ENCODE measurements at regions of chr3 and their contacts with region 1.

Region 1: GRCh38 chr3:12395349-12396012 is 88.8 kb upstream of the TSEN2 start:
- DNase-seq: peak; percentile 46
- H3K4me3 Mint-ChIP-seq: peak overlapping the region; percentile 20
- H3K27ac Mint-ChIP-seq: peak overlapping the region; percentile 40
- H3K4me1 Mint-ChIP-seq: peaks cover 16% of the 10 kb centered on the region
- H3K27me3 Mint-ChIP-seq: peaks cover 27% of the 10 kb centered on the region

Region 2: DNA sequence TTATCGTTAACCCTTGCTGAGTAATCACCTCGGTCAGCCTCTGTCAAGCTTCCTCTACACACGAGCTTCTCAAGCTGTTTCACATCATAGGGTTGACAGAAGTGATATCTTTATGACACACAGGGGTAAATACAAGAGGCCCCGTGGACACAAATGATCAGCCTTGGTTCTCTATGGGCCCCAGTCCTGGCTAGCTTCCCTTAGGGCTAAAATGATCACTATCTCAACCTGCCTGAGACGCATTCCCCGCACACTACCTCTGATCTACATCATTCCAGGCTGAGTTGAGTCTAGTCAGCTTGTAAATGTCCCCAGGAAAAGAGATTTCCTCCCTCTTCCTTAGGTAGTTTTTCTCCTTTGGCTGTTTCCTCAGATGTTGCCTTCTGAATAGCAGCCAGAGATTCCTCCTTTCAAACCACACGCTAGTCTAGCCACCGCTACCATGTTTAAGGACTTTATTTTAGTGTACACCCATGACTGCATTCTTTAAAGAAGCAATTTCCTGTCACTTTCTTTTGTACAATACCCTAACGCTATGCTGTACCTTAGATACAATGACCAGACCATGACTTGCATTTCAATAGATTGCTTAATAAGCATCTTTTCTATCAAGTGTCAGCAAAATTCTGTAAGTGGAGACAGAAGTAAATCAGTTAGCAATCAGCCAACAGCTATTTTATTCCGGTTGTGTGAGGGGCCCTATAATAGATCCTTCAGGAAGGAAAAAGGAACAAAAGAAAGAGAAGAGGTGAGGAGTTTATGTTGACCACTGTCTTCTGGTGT is 141.7 kb before region 1 on chr3:
- CTCF ChIA-PET with region 1: no interaction called
- POLR2A ChIA-PET with region 1: no interaction called
- intact Hi-C with region 1: no loop called
- DNase-seq: no peak
- H3K4me3 Mint-ChIP-seq: no peak overlapping the region
- H3K27ac Mint-ChIP-seq: no peak overlapping the region
- H3K4me1 Mint-ChIP-seq: no peaks in the 10 kb centered on the region
- H3K27me3 Mint-ChIP-seq: peaks cover 16% of the 10 kb centered on the region

Region 3: DNA sequence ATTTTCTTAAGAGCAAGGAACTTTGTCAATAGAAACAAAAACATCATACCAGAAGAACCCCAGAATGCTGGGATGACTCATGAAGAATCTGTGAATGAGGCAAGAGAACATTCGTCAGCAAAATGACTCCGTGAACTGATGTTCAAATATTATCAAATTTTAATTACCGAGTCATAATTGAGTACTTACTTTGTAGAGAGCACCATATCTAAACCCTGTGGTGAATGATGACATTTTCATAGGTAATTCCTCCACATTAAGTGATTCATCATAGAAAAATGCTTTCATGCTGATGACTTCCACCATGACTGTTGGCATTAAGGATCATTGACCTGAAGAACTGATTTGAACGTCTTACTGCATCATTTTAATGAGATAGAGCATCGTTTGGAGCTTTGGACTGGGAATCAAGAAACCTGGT is 50.3 kb before region 1 on chr3:
- CTCF ChIA-PET with region 1: no interaction called
- POLR2A ChIA-PET with region 1: no interaction called
- intact Hi-C with region 1: loop called (anchors 2 kb)
- DNase-seq: no peak
- H3K4me3 Mint-ChIP-seq: peak overlapping the region; percentile 4
- H3K27ac Mint-ChIP-seq: peak overlapping the region; percentile 31
- H3K4me1 Mint-ChIP-seq: peaks cover 9% of the 10 kb centered on the region
- H3K27me3 Mint-ChIP-seq: peaks cover 14% of the 10 kb centered on the region

Region 4: DNA sequence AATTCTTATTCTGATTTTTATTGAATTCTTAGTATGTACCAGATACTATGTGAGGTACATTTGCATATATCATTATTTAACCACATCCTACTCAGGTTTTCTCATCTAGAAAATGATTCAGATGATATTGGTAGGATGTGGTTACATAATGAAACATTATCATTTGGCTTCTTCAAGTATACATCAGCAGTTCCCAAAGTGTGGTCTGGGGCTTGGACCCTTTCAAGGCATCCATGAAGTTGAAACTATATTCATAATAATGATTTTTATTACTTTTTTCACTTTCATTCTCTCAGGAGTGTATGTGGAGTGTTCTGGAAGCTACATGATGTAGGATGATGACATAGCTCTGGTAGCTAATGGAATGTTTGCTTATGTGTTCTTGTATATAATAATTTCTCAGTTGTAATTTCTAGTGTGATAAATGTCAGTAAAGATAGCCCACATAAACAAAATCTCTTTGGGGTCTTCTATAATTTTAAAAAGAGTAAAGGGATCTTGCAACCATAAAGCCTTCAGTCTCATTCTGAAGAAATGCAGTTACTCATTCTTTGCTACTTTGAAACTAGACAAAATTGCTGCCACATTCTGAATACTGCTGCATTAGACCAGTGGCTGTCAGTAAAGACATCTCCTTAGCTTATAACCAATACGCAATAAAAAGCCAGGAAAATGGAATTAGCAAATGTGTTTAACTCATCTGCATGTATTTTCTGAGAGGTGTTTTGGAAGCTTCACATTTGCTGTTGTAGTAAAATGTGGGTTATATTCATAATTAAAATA is 10.8 kb before region 1 on chr3:
- CTCF ChIA-PET with region 1: no interaction called
- POLR2A ChIA-PET with region 1: interaction called, 6 read pairs
- intact Hi-C with region 1: loop called (anchors 1 kb)
- DNase-seq: peak; percentile 12
- H3K4me3 Mint-ChIP-seq: no peak overlapping the region
- H3K27ac Mint-ChIP-seq: no peak overlapping the region
- H3K4me1 Mint-ChIP-seq: peaks cover 16% of the 10 kb centered on the region
- H3K27me3 Mint-ChIP-seq: peaks cover 20% of the 10 kb centered on the region

Region 5: DNA sequence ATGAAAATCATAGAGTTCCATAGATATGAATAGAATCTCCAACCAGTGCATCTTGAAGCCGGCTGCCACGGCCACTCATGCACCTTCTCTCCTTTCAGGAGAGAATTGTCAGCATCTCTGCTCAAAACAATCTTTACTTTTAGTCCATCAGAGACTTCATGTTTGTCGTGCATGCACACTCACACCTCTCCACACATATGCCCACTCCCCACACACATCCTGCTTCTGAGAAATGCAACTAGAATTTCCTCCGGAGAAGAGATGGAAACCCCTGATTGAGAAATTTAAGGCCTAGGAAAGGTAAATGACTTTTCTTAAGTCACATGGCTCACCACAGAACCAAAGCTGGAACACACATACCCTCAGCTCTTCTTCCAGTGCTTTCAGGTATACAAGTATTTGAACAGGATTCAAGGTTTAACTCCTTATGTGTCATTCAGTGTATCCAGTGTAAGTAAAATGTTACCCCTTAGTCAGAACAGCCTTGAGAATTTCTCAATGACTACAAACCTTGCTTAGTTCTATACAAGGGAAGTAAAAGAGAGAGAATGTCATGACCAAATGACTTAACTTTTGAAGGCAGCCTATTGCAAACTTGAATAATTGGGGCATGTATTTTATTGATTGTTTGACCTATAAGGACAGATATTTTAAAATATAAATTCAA is 19.7 kb after region 1 on chr3:
- CTCF ChIA-PET with region 1: no interaction called
- POLR2A ChIA-PET with region 1: no interaction called
- intact Hi-C with region 1: loop called (anchors 1 kb)
- DNase-seq: no peak
- H3K4me3 Mint-ChIP-seq: no peak overlapping the region
- H3K27ac Mint-ChIP-seq: no peak overlapping the region
- H3K4me1 Mint-ChIP-seq: peaks cover 8% of the 10 kb centered on the region
- H3K27me3 Mint-ChIP-seq: peaks cover 5% of the 10 kb centered on the region

Region 6: DNA sequence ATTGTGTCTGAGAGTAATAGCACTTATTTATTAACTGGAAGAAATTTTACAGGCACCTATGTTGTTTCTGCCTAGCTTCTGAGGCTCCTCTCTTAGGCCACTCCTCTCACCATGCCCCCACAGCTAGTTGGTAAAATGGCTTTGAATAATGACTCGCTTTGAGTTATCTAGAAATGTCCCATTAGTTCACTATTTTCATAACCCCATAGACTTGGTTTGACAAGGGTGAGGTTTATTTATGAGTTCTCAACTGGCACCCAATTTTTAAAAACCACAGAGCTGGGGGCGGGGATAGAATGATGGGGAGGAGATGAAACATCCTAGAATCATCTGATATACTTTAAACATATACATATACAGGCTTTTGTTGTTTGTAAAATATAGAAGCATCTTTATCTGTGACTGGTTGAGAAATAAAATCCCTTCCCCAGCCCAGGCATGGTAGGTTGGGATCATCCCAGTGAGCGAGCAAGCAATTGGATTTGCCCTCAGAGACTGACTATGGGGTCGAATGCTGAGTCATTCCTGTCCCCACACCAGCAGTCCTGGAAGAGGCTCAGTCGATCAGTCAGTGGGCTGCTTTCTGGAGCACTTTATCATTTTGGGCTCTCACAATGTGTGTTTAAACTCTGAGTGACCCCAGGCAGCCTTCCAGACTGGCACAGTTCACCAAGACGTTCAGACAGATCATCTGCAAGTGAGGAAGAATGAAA is 28.6 kb after region 1 on chr3:
- CTCF ChIA-PET with region 1: no interaction called
- POLR2A ChIA-PET with region 1: interaction called, 3 read pairs
- intact Hi-C with region 1: loop called (anchors 1 kb)
- DNase-seq: peak; percentile 63
- H3K4me3 Mint-ChIP-seq: no peak overlapping the region
- H3K27ac Mint-ChIP-seq: no peak overlapping the region
- H3K4me1 Mint-ChIP-seq: peaks cover 39% of the 10 kb centered on the region
- H3K27me3 Mint-ChIP-seq: peaks cover 19% of the 10 kb centered on the region

Region 7: GRCh38 chr3:13110678-13111116 is 715.2 kb after region 1 on chr3:
- CTCF ChIA-PET with region 1: no interaction called
- POLR2A ChIA-PET with region 1: no interaction called
- intact Hi-C with region 1: no loop called
- DNase-seq: peak; percentile 34
- H3K4me3 Mint-ChIP-seq: no peak overlapping the region
- H3K27ac Mint-ChIP-seq: no peak overlapping the region
- H3K4me1 Mint-ChIP-seq: peaks cover 7% of the 10 kb centered on the region
- H3K27me3 Mint-ChIP-seq: no peaks in the 10 kb centered on the region

Measured in activated CD4-positive, alpha-beta memory T cell treated with anti-CD3 and anti-CD28 coated beads for 36 hours (primary cell).